Endothelial cell of umbilical vein (primary cell): ENCODE measurements at regions of chr4 and their contacts with region 1.

Region 1: DNA sequence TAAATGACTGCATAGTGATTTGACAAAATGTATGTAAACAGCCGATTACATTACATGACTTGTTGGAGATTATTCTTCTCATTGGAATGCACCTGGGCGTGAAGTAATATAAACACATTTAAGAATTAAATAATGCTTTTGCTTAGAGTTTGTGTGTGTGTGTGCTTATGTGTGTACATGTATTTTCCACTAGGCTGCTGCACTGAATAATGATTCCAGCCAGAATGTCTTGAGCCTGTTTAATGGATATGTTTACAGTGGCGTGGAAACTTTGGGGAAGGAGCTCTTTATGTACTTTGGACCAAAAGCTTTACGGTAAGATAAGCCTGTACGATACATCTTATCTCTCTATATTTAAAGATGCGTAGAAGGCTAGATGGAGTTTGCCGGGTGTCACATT is 12.6 kb downstream of the NEIL3 start:
- DNase-seq: peak; percentile 71
- H3K4me3 ChIP-seq: peak overlapping the region in 2 of 3 experiments; percentile 6 to 51
- H3K27ac ChIP-seq: peak overlapping the region; percentile 21
- H3K4me1 ChIP-seq: peaks cover 13% of the 10 kb centered on the region
- H3K27me3 ChIP-seq: no peaks in the 10 kb centered on the region
- CTCF ChIP-seq: no peak
- POLR2A ChIP-seq: no peak

Region 2: GRCh38 chr4:176319704-176320339 is 1002.4 kb before region 1 on chr4 and contains the start of gene SPCS3:
- CTCF ChIA-PET with region 1: no interaction called
- POLR2A ChIA-PET with region 1: no interaction called
- dilution Hi-C with region 1: no loop called
- intact Hi-C with region 1: loop called (anchors 5 kb)
- DNase-seq: peak; percentile 95
- H3K4me3 ChIP-seq: peak within 1 kb of the TSS; percentile 51 to 85 (median 74)
- H3K27ac ChIP-seq: peak within 1 kb of the TSS; percentile 99
- H3K4me1 ChIP-seq: peaks cover 20% of the 10 kb centered on the region
- H3K27me3 ChIP-seq: no peaks in the 10 kb centered on the region
- CTCF ChIP-seq: no peak
- POLR2A ChIP-seq: peak; percentile 95
- total RNA-seq, gene SPCS3: 179 and 183 TPM in 2 replicates

Region 3: DNA sequence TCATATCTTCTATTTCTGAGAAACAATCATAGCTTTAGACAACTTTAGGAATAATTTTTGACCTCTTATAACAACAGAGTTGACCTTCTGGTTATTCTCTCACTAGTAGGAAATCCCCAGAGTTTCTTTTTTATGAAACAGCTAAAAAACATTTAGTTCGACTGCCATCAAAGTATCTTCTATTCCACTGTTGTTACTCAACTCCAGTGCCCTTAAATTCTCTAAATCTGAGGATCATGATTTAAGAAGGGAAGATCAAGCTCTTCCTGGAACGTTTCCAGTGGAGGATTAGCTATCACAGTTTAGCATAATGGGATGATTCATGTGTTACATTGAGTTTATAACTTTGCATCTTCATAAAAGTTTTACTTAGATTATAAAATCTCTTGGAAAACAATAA is 394.6 kb before region 1 on chr4:
- CTCF ChIA-PET with region 1: no interaction called
- POLR2A ChIA-PET with region 1: no interaction called
- dilution Hi-C with region 1: no loop called
- intact Hi-C with region 1: no loop called
- DNase-seq: peak; percentile 24
- H3K4me3 ChIP-seq: no peak overlapping the region
- H3K27ac ChIP-seq: no peak overlapping the region
- H3K4me1 ChIP-seq: peaks cover 14% of the 10 kb centered on the region
- H3K27me3 ChIP-seq: no peaks in the 10 kb centered on the region
- CTCF ChIP-seq: no peak
- POLR2A ChIP-seq: no peak

Region 4: GRCh38 chr4:177128306-177128705 is 194.0 kb before region 1 on chr4:
- CTCF ChIA-PET with region 1: no interaction called
- POLR2A ChIA-PET with region 1: no interaction called
- dilution Hi-C with region 1: no loop called
- intact Hi-C with region 1: loop called (anchors 10 kb)
- DNase-seq: peak; percentile 77
- H3K4me3 ChIP-seq: peak overlapping the region in 1 of 3 experiments; percentile 10
- H3K27ac ChIP-seq: peak overlapping the region; percentile 77
- H3K4me1 ChIP-seq: peaks cover 19% of the 10 kb centered on the region
- H3K27me3 ChIP-seq: no peaks in the 10 kb centered on the region
- CTCF ChIP-seq: no peak
- POLR2A ChIP-seq: no peak

Region 5: GRCh38 chr4:177309522-177310371 is 12.5 kb before region 1 on chr4 and contains the start of gene NEIL3:
- CTCF ChIA-PET with region 1: interaction called, 21 read pairs
- POLR2A ChIA-PET with region 1: no interaction called
- dilution Hi-C with region 1: no loop called
- intact Hi-C with region 1: no loop called
- DNase-seq: peak; percentile 90
- H3K4me3 ChIP-seq: peak within 1 kb of the TSS; percentile 66 to 97 (median 91)
- H3K27ac ChIP-seq: peak within 1 kb of the TSS; percentile 46
- H3K4me1 ChIP-seq: peaks cover 10% of the 10 kb centered on the region
- H3K27me3 ChIP-seq: no peaks in the 10 kb centered on the region
- CTCF ChIP-seq: no peak
- POLR2A ChIP-seq: peak; percentile 65
- total RNA-seq, gene NEIL3: 6.9 and 8.2 TPM in 2 replicates

Region 6: GRCh38 chr4:177339477-177340374 is 17.5 kb after region 1 on chr4:
- CTCF ChIA-PET with region 1: interaction called, 11 read pairs
- POLR2A ChIA-PET with region 1: no interaction called
- dilution Hi-C with region 1: no loop called
- intact Hi-C with region 1: no loop called
- DNase-seq: peak; percentile 57
- H3K4me3 ChIP-seq: no peak overlapping the region
- H3K27ac ChIP-seq: no peak overlapping the region
- H3K4me1 ChIP-seq: no peaks in the 10 kb centered on the region
- H3K27me3 ChIP-seq: no peaks in the 10 kb centered on the region
- CTCF ChIP-seq: peak; percentile 38 to 51
- POLR2A ChIP-seq: no peak